ENCODE measurements at regions of chr15 and their contacts with region 1.

Region 1: DNA sequence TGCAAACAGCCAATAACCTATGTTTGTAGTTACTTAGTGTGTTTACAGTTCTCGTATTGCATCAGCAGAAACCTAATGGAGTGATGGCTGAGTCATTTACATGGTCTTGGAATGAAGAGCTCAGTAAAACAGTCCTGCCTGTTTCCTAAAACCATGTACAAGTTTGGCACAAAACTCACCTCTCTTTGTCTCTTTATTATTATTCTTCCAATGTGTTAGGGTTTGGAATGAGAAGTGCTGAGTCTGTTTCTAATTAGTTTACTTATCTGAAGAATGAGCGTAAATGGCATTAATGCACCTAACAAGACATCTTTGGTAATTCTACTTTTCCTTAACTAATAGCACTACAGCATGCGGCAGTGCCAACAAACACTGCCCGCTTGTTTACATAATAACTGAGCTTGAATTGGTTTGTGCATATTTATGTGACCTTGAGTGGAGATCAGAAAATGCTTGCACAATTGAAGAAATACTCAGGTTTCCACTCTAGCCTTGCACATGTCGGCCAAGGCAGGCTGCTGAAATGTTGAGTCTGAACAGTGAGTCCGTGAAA is 385.4 kb upstream of the SEMA6D start:
- DNase-seq: peak; percentile 83
- ATAC-seq: peak; percentile 81
- H3K4me3 ChIP-seq: no peak overlapping the region
- H3K27ac ChIP-seq: peak overlapping the region; percentile 80; the same call in 1 of the 2 replicates
- H3K4me1 ChIP-seq: peaks cover 5% of the 10 kb centered on the region
- H3K27me3 ChIP-seq: no peaks in the 10 kb centered on the region
- CTCF ChIP-seq: no peak
- POLR2A ChIP-seq: no peak
- RAD21 ChIP-seq: no peak

Region 2: GRCh38 chr15:47218295-47218694 is 113.6 kb before region 1 on chr15:
- CTCF ChIA-PET with region 1: no interaction called
- POLR2A ChIA-PET with region 1: no interaction called
- dilution Hi-C with region 1: no loop called
- in situ Hi-C with region 1: no loop called
- intact Hi-C with region 1: no loop called
- DNase-seq: no peak
- ATAC-seq: no peak
- H3K4me3 ChIP-seq: no peak overlapping the region
- H3K27ac ChIP-seq: no peak overlapping the region
- H3K4me1 ChIP-seq: no peaks in the 10 kb centered on the region
- H3K27me3 ChIP-seq: no peaks in the 10 kb centered on the region
- CTCF ChIP-seq: no peak
- POLR2A ChIP-seq: no peak
- RAD21 ChIP-seq: no peak

Region 3: DNA sequence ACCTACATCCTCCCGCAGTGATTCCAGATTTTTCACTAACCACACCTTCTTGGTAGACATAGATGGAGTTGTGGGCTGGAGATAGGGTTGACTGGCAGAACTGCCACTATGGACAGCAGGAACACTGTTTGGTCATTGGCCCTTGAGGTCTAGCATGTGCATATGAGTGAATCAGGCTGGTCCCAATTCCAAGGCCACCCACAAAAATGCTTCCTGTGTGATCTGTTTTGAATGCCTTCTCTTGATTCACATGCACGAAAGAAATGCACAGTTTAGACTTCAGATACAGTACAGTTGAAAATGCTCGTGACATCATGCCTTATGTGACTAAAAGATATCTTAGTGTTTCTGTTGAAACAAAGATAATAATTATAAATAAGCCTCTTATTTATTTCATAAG is 99.6 kb after region 1 on chr15:
- CTCF ChIA-PET with region 1: no interaction called
- POLR2A ChIA-PET with region 1: no interaction called
- dilution Hi-C with region 1: no loop called
- in situ Hi-C with region 1: no loop called
- intact Hi-C with region 1: loop called (anchors 5 kb)
- DNase-seq: peak; percentile 97
- ATAC-seq: peak; percentile 81
- H3K4me3 ChIP-seq: no peak overlapping the region
- H3K27ac ChIP-seq: peak overlapping the region; percentile 11; the same call in 1 of the 2 replicates
- H3K4me1 ChIP-seq: peaks cover 20% of the 10 kb centered on the region
- H3K27me3 ChIP-seq: no peaks in the 10 kb centered on the region
- CTCF ChIP-seq: no peak
- POLR2A ChIP-seq: no peak
- RAD21 ChIP-seq: no peak

Region 4: DNA sequence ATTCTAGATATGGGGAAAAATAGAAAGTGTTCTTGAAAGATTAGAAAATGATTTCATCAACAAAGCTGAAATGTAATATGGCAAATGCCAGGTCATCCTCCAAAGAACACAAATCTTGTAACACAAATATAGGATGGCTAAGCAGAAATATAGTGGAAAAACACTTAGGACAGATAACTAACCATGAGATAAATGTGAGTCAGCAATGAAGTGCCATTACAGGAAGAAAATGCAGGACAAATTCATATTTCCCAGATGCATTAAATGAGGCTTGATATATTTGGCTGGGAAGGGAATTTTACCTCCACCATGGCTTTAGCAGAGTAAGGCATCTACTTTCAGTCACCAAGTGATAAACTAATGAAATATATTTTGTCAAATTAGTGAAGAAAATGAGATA is 292.6 kb after region 1 on chr15:
- CTCF ChIA-PET with region 1: no interaction called
- POLR2A ChIA-PET with region 1: no interaction called
- dilution Hi-C with region 1: no loop called
- in situ Hi-C with region 1: no loop called
- intact Hi-C with region 1: no loop called
- DNase-seq: no peak
- ATAC-seq: no peak
- H3K4me3 ChIP-seq: no peak overlapping the region
- H3K27ac ChIP-seq: no peak overlapping the region
- H3K4me1 ChIP-seq: no peaks in the 10 kb centered on the region
- H3K27me3 ChIP-seq: no peaks in the 10 kb centered on the region; the same call in 1 of the 2 replicates
- CTCF ChIP-seq: no peak
- POLR2A ChIP-seq: no peak
- RAD21 ChIP-seq: no peak

Region 5: DNA sequence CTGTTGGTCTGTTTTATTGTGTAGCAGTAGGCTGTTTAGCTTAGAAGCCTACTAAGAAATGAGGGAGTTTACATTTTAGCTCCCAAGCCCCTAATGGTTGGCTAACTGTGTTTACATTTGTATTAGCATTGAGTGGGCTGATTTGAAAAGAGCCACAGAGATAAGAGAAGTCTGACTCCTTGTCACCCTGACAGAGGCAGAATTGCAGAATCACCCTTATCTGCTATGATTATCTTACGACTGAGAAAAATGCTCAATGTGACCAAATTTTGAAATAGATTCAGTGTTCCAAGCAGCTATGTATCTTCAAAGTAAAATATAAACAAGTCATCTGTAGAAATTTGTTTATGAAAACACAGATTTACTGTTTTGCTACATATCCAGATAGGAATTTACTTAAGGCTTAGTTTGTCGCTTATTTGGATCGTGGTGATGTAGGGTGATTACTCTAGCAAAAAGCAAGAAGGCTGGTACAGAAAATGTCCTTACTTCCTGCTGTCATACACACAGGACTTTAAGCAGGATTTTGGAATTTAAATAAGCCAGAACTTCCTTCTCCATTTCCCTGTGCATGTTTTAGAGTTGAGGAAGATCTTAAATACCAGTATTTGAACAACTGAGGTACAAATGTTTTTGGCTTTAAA is 404.3 kb after region 1 on chr15:
- CTCF ChIA-PET with region 1: no interaction called
- POLR2A ChIA-PET with region 1: no interaction called
- dilution Hi-C with region 1: no loop called
- in situ Hi-C with region 1: no loop called
- intact Hi-C with region 1: loop called (anchors 5 kb)
- DNase-seq: peak; percentile 41
- ATAC-seq: peak; percentile 77
- H3K4me3 ChIP-seq: no peak overlapping the region
- H3K27ac ChIP-seq: peak overlapping the region; percentile 52; the same call in 1 of the 2 replicates
- H3K4me1 ChIP-seq: peaks cover 6% of the 10 kb centered on the region
- H3K27me3 ChIP-seq: no peaks in the 10 kb centered on the region
- CTCF ChIP-seq: no peak
- POLR2A ChIP-seq: no peak
- RAD21 ChIP-seq: no peak

Measured in IMR-90 (cell line).